GM18951 (cell line): ENCODE measurements at regions of chr1 and their contacts with region 1.

Region 1: DNA sequence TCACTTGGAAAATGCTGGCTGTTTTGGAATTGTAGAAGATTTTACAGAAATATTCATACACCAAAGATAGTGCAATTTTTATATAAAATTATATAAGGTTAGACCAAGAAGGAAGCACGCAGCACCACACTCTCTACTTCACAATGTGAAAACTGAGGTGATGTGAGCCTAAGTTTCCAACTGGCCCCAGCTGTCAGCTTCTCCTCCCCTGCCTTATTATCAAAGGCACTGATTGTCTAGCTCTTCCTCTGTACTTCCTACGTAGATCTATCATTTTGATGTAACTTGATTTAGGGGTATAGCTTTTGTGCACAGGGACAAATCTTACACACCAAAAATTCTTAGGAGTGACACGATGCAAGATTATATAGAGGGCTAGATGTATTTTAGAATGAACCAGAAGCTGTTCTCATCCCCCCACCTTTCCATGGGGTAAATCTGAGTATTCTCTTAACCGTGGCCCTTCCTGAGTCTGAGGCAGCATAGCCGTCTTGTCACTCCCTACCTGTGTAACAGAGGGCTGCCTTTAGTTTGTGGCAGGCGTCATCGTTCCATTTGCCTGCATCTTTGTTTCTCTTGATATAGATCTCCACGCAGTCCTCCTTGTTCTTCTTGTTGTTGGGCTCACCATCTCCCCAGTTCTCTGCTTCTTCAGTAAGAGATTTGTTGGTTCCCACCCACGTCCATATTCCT is 3.4 kb downstream of the SELL start:
- POLR2A ChIP-seq: no peak

Region 2: DNA sequence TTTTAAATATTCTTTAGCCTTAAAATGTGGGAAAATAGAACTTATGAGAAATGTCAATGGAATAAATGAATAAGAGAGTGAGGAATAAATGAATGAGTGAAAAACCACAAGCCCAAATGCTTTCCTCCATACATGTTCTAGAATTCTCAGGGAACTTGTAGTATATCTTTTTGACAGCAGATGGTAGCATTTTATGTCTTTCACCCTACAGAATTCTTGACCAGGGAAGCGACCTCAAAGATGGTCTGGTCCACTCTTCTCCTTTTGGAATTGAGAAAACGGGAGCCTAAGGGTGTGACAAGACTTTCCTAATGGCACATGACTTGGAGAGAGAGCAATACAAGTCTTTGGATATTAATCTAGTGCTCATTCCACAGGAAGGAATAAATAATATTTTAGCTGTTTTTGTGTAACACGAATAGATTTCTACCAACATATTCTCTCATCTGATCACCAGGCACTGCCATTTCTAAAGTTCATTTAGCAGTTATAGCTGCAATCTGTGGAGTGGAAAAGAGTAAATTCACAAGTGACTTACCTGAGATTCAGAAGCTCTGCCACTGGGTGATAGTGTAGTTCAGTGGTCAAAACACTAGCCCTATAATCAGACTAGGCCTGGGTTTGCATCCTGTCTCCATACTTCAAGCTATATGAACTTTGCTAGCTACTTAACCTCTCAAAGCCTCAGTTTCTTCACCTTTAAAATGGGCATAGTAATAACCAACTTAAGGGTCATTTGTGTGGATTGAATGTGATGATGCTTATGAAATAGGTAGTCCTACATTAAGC is 106.8 kb before region 1 on chr1:
- in situ Hi-C with region 1: loop called (anchors 10 kb)
- POLR2A ChIP-seq: no peak